ENCODE measurements at regions of chr6 and their contacts with region 1.

Region 1: GRCh38 chr6:87197547-87197946 is 42.2 kb downstream of the ZNF292 start:
- DNase-seq: no peak
- H3K4me3 Mint-ChIP-seq: no peak overlapping the region
- H3K27ac Mint-ChIP-seq: no peak overlapping the region
- H3K4me1 Mint-ChIP-seq: peaks cover 53% of the 10 kb centered on the region
- H3K27me3 Mint-ChIP-seq: no peaks in the 10 kb centered on the region

Region 2: GRCh38 chr6:87012035-87012434 is 185.5 kb before region 1 on chr6:
- intact Hi-C with region 1: no loop called
- DNase-seq: no peak
- H3K4me3 Mint-ChIP-seq: no peak overlapping the region
- H3K27ac Mint-ChIP-seq: no peak overlapping the region
- H3K4me1 Mint-ChIP-seq: no peaks in the 10 kb centered on the region
- H3K27me3 Mint-ChIP-seq: no peaks in the 10 kb centered on the region

Region 3: GRCh38 chr6:87210979-87211378 is 13.4 kb after region 1 on chr6:
- intact Hi-C with region 1: loop called (anchors 1 kb)
- DNase-seq: no peak
- H3K4me3 Mint-ChIP-seq: no peak overlapping the region
- H3K27ac Mint-ChIP-seq: no peak overlapping the region
- H3K4me1 Mint-ChIP-seq: peaks cover 59% of the 10 kb centered on the region
- H3K27me3 Mint-ChIP-seq: no peaks in the 10 kb centered on the region

Region 4: DNA sequence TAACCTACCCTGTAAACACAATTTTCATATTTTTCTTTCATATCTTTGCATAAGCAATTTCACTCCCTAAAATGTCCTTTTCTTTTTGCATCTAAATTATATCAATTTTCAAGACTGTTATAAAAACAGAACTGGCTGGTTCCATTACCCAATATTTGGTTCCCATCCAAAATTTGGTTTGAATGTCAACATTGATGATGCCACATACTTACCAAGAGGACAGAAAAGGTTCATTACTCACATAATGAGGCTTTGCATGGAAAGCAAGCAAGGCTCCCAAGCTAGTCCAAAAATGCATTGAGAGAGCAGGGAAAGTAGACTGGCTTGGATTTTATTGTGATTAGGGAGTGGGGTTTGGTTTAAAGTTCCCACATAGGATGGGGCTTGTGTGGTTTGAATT is 648.9 kb after region 1 on chr6:
- intact Hi-C with region 1: no loop called
- DNase-seq: no peak
- H3K4me3 Mint-ChIP-seq: no peak overlapping the region
- H3K27ac Mint-ChIP-seq: no peak overlapping the region
- H3K4me1 Mint-ChIP-seq: no peaks in the 10 kb centered on the region
- H3K27me3 Mint-ChIP-seq: peaks cover 23% of the 10 kb centered on the region